Dendritic cell treated with granulocyte-macrophage colony-stimulating factor and Interleukin-4, amounts not matched to agents 40 ng/mL and 50 ng/mL, for 4 days (primary cell): ENCODE measurements at regions of chrX and their contacts with region 1.

Region 1: GRCh38 chrX:128816919-128817318 is 706.4 kb downstream of the SMARCA1 start:
- H3K4me3 Mint-ChIP-seq: no peak overlapping the region
- H3K27ac Mint-ChIP-seq: no peak overlapping the region
- H3K4me1 Mint-ChIP-seq: no peaks in the 10 kb centered on the region
- H3K27me3 Mint-ChIP-seq: no peaks in the 10 kb centered on the region

Region 2: GRCh38 chrX:129360175-129360574 is 543.3 kb after region 1 on chrX:
- intact Hi-C with region 1: loop called (anchors 5 kb)
- H3K4me3 Mint-ChIP-seq: no peak overlapping the region
- H3K27ac Mint-ChIP-seq: no peak overlapping the region
- H3K4me1 Mint-ChIP-seq: peaks cover 5% of the 10 kb centered on the region
- H3K27me3 Mint-ChIP-seq: no peaks in the 10 kb centered on the region